BJ (cell line): ENCODE measurements at regions of chr19 and their contacts with region 1.

Region 1: DNA sequence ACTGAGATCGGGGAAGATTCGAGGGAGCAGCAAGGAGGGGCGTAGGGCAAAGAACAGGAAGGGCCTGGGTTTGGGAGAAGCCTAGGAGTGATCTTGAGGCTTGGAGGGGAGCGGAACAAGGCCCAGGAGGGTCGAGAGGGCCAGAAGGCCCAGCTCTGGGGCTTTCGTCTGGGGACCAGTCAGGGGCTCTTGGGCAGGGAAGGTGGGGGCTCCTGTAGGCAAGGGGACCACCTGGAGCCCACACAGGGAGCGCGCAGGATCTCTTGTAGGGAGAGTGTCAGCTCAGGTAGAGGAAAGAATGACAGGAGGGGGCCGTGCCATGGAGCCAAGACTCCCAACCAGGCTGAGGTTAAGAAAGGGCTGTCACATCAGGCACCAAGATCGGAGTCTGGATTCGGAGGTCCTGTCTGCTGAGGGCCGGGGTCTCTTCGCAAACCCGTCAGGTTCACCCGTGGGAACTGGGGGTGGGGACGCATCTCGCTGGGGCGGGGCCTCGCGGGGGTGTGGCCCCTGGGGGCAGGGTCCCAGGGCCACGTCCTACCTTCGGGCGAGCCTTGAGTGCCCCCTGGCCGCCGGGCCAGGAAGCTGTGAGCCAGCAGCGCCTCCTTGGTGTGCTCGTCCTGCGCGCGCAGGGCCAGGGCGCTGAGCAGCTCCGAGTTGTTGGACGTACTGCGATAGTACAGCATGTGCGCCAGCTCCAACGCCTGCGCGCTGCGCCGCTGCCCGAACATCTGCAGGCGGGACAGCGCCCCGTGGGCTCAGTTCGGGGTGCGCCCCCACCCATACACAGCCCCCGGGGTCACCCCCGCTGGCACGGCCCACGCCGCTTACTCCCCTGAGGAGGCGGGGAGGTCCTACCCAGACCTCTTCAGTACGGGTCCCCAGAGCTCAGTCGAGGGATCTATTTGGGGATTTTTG is 8.4 kb downstream of the EMP3 start:
- DNase-seq: peak; percentile 37
- H3K4me3 ChIP-seq: peak overlapping the region; percentile 35
- H3K27me3 ChIP-seq: no peaks in the 10 kb centered on the region
- CTCF ChIP-seq: peak; percentile 93

Region 2: DNA sequence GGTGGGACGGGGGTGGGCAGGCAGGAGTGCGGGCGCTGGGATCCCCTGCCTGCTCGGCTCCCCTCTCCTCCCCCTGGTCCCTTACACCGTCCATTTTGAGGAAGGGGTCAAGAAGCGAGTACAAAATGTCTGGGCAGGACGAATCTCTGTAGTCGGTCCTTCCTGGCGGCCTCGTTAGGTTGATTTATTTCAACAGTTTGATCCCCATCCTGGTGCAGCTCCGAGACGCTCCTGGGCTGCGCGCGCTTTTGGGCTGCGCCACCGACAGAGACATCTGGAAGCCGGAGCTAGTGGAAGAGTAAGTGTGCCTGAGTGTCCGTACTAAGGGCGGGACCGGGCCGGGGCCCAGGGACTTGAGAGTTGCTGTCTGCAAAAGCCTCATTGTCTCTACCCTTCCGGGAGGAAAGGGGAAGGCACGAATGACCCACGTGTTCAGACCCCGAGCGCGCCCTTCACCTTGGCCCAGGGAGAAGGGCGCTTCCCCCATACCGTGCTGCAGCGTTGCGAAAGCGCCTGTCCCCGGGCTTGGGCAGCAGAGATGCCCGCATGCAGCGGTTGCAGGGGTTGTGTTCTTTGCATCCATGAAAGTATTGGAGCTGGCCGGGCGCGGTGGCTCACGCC is 62.1 kb before region 1 on chr19:
- CTCF ChIA-PET with region 1: interaction called, 14 read pairs
- POLR2A ChIA-PET with region 1: no interaction called
- DNase-seq: no peak
- H3K4me3 ChIP-seq: peak overlapping the region; percentile 28
- H3K27me3 ChIP-seq: no peaks in the 10 kb centered on the region
- CTCF ChIP-seq: no peak

Region 3: GRCh38 chr19:48321622-48322591 is 11.8 kb before region 1 on chr19:
- CTCF ChIA-PET with region 1: interaction called, 153 read pairs
- POLR2A ChIA-PET with region 1: interaction called, 7 read pairs
- DNase-seq: peak; percentile 91
- H3K4me3 ChIP-seq: peak overlapping the region; percentile 59
- H3K27me3 ChIP-seq: no peaks in the 10 kb centered on the region
- CTCF ChIP-seq: no peak

Region 4: DNA sequence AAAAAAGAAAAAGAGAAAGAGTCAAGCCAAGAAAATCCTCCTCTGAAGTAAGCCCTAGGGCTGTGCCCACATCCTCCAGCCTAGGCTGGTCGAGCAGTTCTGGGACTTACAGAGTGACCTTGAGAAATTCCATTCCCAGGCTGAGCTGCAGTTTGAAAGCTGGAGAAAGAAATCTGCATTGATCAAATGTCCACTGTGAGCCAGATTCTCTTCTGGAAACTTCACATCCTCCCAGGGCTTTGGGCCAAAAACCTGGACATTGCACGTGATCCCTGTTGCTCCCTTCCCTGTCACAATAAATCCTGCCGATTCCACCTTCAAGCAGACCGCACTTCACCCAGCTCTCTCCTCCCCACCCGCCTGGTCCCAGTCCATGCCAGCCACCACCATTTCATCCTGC is 14.3 kb after region 1 on chr19:
- CTCF ChIA-PET with region 1: interaction called, 20 read pairs
- POLR2A ChIA-PET with region 1: no interaction called
- DNase-seq: no peak
- H3K4me3 ChIP-seq: no peak overlapping the region
- H3K27me3 ChIP-seq: no peaks in the 10 kb centered on the region
- CTCF ChIP-seq: no peak

Region 5: GRCh38 chr19:48510421-48511280 is 176.9 kb after region 1 on chr19:
- CTCF ChIA-PET with region 1: no interaction called
- POLR2A ChIA-PET with region 1: interaction called, 11 read pairs
- DNase-seq: no peak
- H3K4me3 ChIP-seq: peak overlapping the region; percentile 7; the same call in 1 of the 2 replicates
- H3K27me3 ChIP-seq: peaks cover 21% of the 10 kb centered on the region
- CTCF ChIP-seq: no peak